GM10248 (cell line): ENCODE measurements at regions of chr11 and their contacts with region 1.

Region 1: DNA sequence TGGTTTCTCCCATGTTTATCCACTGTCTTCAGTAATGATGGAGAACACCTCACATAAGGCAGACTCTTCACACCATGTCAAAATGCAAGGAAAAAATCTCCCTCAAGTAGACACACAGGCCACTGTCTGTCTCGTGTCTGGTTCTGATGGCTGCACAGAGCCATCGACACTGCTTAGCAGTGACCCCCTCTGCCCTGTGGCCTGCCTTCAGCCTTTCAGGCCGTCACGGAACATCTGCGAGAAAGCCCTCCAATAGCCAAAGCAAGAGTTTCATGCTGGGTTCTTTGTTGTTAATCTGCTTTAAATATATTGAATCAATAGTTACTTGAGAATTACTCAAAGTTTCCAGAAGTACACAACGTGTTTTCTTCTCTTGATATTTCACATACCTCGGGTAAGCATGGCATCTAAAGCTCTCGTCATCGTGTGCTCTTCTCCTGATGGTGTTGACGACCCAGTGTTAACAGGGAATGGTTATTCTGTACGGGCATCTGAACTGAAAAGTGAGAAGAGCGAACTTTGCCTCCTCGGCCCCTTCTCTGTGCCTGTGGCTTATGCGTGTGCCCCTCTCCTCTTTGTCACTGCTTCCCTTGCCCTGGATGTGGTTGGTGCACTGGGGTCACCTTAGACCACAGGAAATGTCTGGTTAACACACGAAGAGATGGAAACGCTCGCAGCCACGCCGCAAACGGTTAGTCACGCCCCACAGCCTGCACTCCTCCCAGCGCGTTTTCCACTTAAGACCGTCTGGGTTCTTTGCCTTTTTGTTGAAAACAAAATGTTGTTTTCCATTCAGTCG is 33.4 kb upstream of the CTTN start:
- DNase-seq: no peak
- CTCF ChIP-seq: no peak

Region 2: DNA sequence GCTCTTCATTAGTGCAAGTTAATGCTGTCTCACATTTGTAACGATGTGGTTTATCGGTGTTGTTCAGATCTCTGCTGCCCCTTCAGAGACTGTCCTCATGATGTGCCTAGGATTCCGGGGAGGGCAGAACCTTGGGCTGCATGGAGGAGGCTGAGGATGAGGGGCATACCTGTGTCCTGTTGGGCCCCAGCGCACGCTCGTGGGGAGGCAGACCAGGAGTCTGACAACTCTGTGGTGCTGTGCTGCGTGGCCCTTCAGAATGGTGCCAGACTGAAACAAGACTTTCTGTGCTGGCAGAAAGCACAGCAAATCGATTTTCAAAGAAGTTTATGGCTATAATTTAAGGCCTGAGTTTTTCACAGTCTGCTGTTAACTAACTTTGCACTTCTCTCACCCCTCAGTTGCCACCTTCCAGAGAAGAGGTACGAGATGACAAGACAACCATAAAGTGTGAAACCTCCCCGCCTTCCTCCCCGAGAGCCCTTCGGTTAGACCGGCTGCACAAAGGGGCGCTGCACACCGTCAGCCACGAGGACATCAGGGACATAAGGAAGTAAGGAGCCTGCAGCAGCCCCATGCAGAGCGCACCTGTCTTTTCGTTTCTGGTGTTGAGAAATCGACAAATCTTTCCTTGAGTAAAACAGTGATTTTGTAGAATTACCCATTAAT is 10.9 kb before region 1 on chr11:
- CTCF ChIA-PET with region 1: interaction called, 16 read pairs
- POLR2A ChIA-PET with region 1: no interaction called
- DNase-seq: no peak
- CTCF ChIP-seq: no peak

Region 3: GRCh38 chr11:70437111-70437784 is 72.3 kb after region 1 on chr11:
- CTCF ChIA-PET with region 1: no interaction called
- POLR2A ChIA-PET with region 1: no interaction called
- DNase-seq: no peak
- CTCF ChIP-seq: no peak